Tibial artery (tissue), 4 donors: ENCODE measurements at regions of chr1 and their contacts with region 1.

Region 1: DNA sequence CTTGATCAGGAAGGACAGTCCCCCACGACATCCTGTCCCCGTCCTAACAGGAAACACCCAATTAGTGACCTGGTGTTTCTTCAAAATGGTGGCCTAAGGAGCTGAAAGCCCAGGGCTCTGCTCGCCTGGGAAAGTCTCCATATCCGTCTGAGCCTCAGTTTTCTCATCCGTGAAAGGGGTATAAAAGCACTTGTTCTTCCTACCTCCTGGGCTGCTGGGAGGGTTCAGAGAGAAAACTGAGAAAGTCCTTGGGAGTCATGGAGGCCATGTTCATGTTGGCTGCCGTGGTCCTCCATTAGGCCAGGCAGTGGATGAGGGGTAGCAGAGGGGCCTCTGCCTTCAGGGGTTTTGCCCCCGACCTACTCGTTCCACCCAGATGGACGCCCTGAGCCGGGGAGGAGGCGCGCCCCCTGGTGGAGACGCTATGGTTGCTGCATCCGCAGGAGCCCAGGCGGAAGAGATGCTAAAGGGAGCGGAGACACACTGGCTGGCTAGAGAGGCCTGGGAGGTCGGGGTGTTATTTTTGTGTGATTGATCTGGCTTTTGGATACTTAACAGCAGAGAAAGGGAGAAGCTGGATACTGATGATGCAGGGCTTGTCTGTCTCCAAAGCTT is 113.5 kb downstream of the PRDM2 start:
- DNase-seq: no peak
- H3K4me3 ChIP-seq: no peak overlapping the region
- H3K27ac ChIP-seq: no peak overlapping the region
- H3K4me1 ChIP-seq: no peaks in the 10 kb centered on the region
- H3K27me3 ChIP-seq: no peaks in the 10 kb centered on the region
- CTCF ChIP-seq: peak; percentile 46 to 55

Region 2: GRCh38 chr1:13667691-13668090 is 145.8 kb before region 1 on chr1:
- intact Hi-C with region 1: loop called (anchors 5 kb)
- DNase-seq: no peak
- H3K4me3 ChIP-seq: no peak overlapping the region
- H3K27ac ChIP-seq: no peak overlapping the region
- H3K4me1 ChIP-seq: no peaks in the 10 kb centered on the region
- H3K27me3 ChIP-seq: peaks cover 0 to 17% of the 10 kb centered on the region in 2 donors
- CTCF ChIP-seq: no peak

Region 3: GRCh38 chr1:14037101-14037847 is 223.8 kb after region 1 on chr1:
- intact Hi-C with region 1: no loop called
- DNase-seq: no peak
- H3K4me3 ChIP-seq: no peak overlapping the region
- H3K27ac ChIP-seq: no peak overlapping the region
- H3K4me1 ChIP-seq: no peaks in the 10 kb centered on the region
- H3K27me3 ChIP-seq: peaks cover 0 to 6% of the 10 kb centered on the region in 2 donors
- CTCF ChIP-seq: no peak